Vagina (tissue), 2 donors: ENCODE measurements at regions of chr11 and their contacts with region 1.

Region 1: GRCh38 chr11:12043959-12044819 is 35.8 kb upstream of the DKK3 start:
- DNase-seq: peak in 1 of 2 donors; percentile 99
- H3K4me3 ChIP-seq: no peak overlapping the region
- H3K27ac ChIP-seq: peak overlapping the region; percentile 65
- H3K4me1 ChIP-seq: peaks cover 19% of the 10 kb centered on the region
- H3K27me3 ChIP-seq: no peaks in the 10 kb centered on the region
- CTCF ChIP-seq: peak; percentile 84 to 97 (median 85)
- POLR2A ChIP-seq: no peak

Region 2: DNA sequence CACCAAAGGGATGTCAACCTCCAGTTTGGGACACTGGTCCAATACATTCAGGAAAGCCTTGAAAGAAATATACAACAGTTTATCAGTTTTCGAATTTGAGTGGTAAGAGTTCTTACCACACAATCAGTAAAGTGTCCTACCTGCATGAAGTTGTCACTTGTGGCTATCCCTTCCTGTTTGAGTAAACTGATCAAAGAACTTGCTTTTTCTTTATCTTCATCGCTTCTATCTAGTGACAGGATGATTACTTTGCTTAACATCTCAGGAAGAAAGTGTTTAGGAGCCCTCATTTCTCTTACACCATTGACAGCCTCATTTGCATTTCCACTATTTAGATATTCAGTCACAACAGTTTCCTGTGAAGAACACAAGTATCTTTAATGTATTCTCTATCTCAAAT is 1243.9 kb before region 1 on chr11:
- intact Hi-C with region 1: loop called (anchors 5 kb)
- DNase-seq: no peak
- H3K4me3 ChIP-seq: no peak overlapping the region
- H3K27ac ChIP-seq: no peak overlapping the region
- H3K4me1 ChIP-seq: peaks cover 23% of the 10 kb centered on the region
- H3K27me3 ChIP-seq: no peaks in the 10 kb centered on the region
- CTCF ChIP-seq: no peak
- POLR2A ChIP-seq: no peak

Region 3: GRCh38 chr11:11044137-11044855 is 999.9 kb before region 1 on chr11:
- intact Hi-C with region 1: loop called (anchors 5 kb)
- DNase-seq: no peak
- H3K4me3 ChIP-seq: no peak overlapping the region
- H3K27ac ChIP-seq: no peak overlapping the region
- H3K4me1 ChIP-seq: peaks cover 17% of the 10 kb centered on the region
- H3K27me3 ChIP-seq: no peaks in the 10 kb centered on the region
- CTCF ChIP-seq: no peak
- POLR2A ChIP-seq: no peak

Region 4: DNA sequence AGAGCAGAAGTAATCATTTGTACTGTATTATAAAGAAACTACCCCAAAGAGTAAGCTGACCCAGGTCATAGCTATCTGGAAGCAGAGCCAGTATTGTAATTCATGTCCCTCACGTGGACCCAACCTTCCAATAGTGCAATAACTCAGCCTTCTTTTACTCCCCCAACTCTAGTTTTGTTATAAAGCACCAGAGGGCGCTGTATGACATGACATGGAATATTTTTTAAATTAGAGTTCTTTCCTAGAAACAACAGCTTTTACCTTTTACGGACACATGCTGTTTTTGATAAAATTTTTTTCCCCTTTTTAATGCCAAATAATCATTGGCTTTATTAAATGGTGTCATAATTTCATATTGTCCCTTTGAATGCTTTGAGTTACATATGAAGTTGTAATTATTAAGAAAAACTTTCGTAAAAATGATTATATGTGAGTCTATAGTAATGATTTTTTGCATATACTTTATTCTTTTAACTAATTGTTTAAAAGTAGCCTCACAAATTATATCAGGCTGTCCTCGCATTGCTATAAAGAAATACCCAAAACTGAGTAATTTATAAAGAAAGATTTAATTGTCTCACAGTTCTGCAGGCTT is 112.6 kb before region 1 on chr11:
- intact Hi-C with region 1: loop called (anchors 5 kb)
- DNase-seq: no peak
- H3K4me3 ChIP-seq: no peak overlapping the region
- H3K27ac ChIP-seq: peak overlapping the region; percentile 9
- H3K4me1 ChIP-seq: no peaks in the 10 kb centered on the region
- H3K27me3 ChIP-seq: no peaks in the 10 kb centered on the region
- CTCF ChIP-seq: peak; percentile 45 to 67 (median 60)
- POLR2A ChIP-seq: no peak

Region 5: GRCh38 chr11:11977206-11977938 is 66.8 kb before region 1 on chr11:
- intact Hi-C with region 1: loop called (anchors 10 kb)
- DNase-seq: peak; percentile 82 to 90
- H3K4me3 ChIP-seq: peak overlapping the region in 1 of 2 donors; percentile 33
- H3K27ac ChIP-seq: peak overlapping the region; percentile 72
- H3K4me1 ChIP-seq: peaks cover 87% of the 10 kb centered on the region
- H3K27me3 ChIP-seq: no peaks in the 10 kb centered on the region
- CTCF ChIP-seq: no peak
- POLR2A ChIP-seq: no peak